ENCODE measurements at regions of chr2 and their contacts with region 1.

Region 1: DNA sequence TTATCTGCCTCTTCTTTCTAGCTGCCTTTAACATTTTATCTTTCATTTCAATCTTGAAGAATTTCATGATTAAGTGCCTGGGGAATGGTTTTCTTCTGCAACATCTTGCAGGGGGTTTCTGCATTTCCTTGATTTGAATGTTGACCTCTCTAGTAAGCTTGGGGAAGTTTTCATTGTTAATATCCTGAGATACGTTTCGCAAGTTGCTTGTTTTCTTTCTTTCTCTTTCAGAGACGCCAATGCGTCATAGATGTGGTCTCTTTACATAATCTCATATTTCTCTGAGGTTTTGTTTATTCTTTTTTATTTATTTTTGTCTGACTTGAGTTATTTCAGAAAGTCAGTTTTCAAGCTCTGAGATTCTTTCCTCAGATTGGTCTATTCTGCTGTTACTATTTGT is 225.7 kb downstream of the XIRP2 start:
- DNase-seq: no peak
- ATAC-seq: no peak
- H3K4me3 ChIP-seq: no peak overlapping the region
- H3K4me3 Mint-ChIP-seq: no peak overlapping the region
- H3K27ac ChIP-seq: no peak overlapping the region
- H3K27ac Mint-ChIP-seq: no peak overlapping the region
- H3K4me1 ChIP-seq: no peaks in the 10 kb centered on the region
- H3K4me1 Mint-ChIP-seq: no peaks in the 10 kb centered on the region
- H3K27me3 ChIP-seq: no peaks in the 10 kb centered on the region
- H3K27me3 Mint-ChIP-seq: no peaks in the 10 kb centered on the region
- CTCF ChIP-seq: no peak

Region 2: DNA sequence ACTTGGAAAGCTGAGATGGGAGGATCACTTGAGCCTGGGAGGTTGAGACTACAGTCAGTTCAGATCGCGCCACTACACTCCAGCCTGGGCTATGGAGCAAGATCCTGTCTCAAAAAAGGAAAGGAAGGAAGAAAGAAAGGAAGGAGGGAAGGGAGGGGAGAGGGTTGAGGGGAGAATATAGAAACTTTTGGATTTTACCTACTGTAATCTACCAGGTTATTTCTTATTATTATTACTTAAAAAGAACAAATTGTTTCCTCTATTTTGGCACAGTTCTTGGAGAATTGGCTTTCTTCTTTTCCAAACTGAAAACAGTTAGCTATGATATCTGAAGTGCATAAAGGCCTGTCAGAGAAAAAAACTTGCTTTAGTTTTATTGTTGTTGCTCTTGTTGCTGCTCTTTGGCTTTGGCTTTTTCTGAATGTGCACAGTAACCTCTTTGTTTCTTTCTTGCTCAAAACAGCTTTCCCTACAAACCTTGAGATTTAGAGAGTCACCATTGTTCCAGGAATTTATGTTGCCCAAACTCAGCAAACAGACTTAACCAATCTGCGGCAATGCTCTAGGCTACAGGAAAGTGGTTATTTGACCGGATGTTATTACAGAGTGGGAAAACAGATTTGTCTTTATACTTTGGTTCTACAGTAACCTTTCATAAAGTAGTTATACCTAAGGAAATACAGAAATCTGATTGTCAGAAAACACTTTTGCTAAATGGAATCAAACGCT is 10.8 kb before region 1 on chr2:
- CTCF ChIA-PET with region 1: no interaction called
- POLR2A ChIA-PET with region 1: no interaction called
- intact Hi-C with region 1: loop called in 1 of 2 experiments (anchors 1 kb)
- DNase-seq: no peak
- ATAC-seq: no peak
- H3K4me3 ChIP-seq: no peak overlapping the region
- H3K4me3 Mint-ChIP-seq: no peak overlapping the region
- H3K27ac ChIP-seq: no peak overlapping the region
- H3K27ac Mint-ChIP-seq: no peak overlapping the region
- H3K4me1 ChIP-seq: no peaks in the 10 kb centered on the region
- H3K4me1 Mint-ChIP-seq: no peaks in the 10 kb centered on the region
- H3K27me3 ChIP-seq: no peaks in the 10 kb centered on the region
- H3K27me3 Mint-ChIP-seq: no peaks in the 10 kb centered on the region
- CTCF ChIP-seq: no peak

Measured in CD4-positive, alpha-beta T cell (primary cell).